HepG2 (cell line): ENCODE measurements at regions of chr3 and their contacts with region 1.

Region 1: DNA sequence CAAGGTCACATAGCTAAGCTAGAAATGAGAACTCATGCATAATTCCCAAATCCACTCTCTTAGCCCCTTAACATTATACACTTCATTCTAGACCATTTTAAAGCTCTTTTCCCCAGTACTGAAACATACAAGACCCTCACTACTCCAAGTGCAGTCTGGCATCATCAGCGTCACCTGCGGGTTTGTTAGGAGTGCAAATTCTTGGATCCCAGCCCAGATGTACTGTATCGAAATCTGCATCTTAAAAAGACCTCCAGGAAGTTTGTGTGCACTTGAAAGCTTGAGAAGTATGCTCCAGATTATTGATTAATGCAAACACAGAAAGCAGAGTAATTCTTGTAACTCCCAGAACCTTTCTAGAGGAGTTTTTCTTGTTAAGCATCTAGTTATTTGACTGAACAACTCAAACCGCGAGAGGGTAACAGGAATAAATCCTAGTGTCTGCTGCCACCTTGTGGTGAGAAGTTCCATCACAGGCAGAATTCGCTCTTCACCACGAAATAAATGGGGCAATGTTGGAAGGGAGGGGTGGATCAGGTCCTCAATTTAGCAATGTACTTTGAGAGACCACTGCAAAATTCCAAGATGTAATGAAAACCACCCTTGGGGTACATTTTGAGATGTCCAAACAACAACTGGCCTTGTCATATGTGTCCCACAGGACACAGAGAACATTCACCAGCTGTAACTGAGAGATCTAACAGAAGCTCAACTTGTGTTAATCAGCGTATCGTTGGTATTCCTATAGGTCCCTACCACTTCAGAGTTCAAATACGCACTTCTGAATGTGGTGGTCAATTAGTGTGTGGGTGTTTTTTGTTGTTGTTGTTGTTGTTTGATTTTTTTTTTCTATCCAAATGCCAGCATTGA is 583 bp upstream of the C3orf49 start:
- DNase-seq: peak; percentile 37
- ATAC-seq: peak; percentile 78
- H3K4me3 ChIP-seq: no peak overlapping the region
- H3K27ac ChIP-seq: no peak overlapping the region
- H3K4me1 ChIP-seq: peaks cover 10% of the 10 kb centered on the region
- H3K27me3 ChIP-seq: no peaks in the 10 kb centered on the region
- CTCF ChIP-seq: peak; percentile 84
- EP300 ChIP-seq: no peak
- POLR2A ChIP-seq: no peak
- RAD21 ChIP-seq: peak; percentile 63; the same call in 1 of the 2 replicates

Region 2: DNA sequence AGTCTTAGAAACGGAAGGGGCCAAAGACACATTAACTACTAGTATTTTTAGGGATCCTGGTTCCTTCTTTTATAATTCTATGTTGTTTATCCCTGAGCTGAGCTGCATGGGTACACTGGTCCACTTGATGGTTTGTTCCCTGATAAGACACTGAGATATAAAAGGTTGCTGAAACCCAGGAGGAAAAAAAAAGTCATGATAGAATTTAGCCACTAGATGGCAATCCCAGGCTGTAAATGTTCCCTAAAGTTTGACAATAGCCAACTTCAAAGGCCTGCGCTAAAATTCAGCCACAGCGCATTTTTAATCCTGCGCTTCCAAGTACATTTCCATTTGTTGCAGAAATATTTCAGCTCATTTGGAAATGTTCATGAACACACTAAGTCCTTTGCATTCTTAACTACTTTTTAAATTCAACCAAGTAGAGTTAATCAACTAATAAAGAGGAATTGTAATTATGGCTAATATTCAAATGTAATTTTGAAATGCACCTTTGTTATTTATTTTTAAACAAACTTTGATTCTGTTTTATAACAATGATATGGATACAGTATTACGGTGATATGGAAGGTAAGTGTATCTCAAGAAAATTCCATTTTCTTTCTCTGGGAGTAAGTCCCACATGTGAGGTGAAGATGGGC is 1195.8 kb before region 1 on chr3:
- CTCF ChIA-PET with region 1: no interaction called
- POLR2A ChIA-PET with region 1: no interaction called
- in situ Hi-C with region 1: loop called (anchors 25 kb)
- intact Hi-C with region 1: loop called (anchors 2 kb)
- DNase-seq: peak; percentile 48
- ATAC-seq: peak; percentile 30; the same call in 2 of the 3 replicates
- H3K4me3 ChIP-seq: no peak overlapping the region
- H3K27ac ChIP-seq: no peak overlapping the region
- H3K4me1 ChIP-seq: no peaks in the 10 kb centered on the region
- H3K27me3 ChIP-seq: no peaks in the 10 kb centered on the region
- CTCF ChIP-seq: peak; percentile 64
- EP300 ChIP-seq: no peak
- POLR2A ChIP-seq: no peak
- RAD21 ChIP-seq: peak; percentile 22; the same call in 1 of the 2 replicates

Region 3: DNA sequence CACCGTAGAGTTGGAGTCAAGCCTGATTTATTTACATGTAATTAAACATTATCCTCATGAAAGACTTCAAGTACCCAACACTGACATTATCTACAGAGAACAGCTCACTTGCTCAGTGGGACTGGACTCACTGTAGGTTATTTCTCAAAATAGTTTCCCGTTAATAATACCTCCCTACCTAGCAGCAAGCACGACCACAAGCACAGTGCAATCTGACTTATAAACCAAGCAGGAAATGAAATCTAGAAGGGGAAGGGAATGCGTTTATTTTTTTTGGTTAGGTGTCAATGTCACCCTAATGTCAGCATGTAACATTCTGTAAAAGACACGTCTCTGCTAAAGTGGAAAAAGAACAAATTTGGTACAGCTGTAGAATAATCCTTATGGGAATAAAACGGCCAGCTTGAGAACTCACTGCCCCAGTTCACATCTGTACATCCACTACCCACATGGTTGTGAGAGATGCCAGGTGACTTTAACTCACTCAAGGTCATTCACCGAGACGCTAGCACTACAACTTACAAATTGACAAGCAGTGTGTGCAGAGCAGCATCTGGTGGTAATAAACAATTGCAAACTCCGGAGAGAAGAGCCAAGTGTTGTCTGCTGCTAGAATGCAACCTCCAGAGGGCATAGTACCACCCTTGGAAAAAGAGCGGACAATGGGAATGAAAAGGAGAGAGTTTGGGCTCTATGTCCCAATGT is 1185.9 kb before region 1 on chr3:
- CTCF ChIA-PET with region 1: no interaction called
- POLR2A ChIA-PET with region 1: no interaction called
- in situ Hi-C with region 1: loop called (anchors 25 kb)
- intact Hi-C with region 1: no loop called
- DNase-seq: no peak
- ATAC-seq: peak; percentile 41; the same call in 2 of the 3 replicates
- H3K4me3 ChIP-seq: no peak overlapping the region
- H3K27ac ChIP-seq: no peak overlapping the region
- H3K4me1 ChIP-seq: no peaks in the 10 kb centered on the region
- H3K27me3 ChIP-seq: no peaks in the 10 kb centered on the region
- CTCF ChIP-seq: no peak
- EP300 ChIP-seq: no peak
- POLR2A ChIP-seq: no peak
- RAD21 ChIP-seq: no peak

Region 4: DNA sequence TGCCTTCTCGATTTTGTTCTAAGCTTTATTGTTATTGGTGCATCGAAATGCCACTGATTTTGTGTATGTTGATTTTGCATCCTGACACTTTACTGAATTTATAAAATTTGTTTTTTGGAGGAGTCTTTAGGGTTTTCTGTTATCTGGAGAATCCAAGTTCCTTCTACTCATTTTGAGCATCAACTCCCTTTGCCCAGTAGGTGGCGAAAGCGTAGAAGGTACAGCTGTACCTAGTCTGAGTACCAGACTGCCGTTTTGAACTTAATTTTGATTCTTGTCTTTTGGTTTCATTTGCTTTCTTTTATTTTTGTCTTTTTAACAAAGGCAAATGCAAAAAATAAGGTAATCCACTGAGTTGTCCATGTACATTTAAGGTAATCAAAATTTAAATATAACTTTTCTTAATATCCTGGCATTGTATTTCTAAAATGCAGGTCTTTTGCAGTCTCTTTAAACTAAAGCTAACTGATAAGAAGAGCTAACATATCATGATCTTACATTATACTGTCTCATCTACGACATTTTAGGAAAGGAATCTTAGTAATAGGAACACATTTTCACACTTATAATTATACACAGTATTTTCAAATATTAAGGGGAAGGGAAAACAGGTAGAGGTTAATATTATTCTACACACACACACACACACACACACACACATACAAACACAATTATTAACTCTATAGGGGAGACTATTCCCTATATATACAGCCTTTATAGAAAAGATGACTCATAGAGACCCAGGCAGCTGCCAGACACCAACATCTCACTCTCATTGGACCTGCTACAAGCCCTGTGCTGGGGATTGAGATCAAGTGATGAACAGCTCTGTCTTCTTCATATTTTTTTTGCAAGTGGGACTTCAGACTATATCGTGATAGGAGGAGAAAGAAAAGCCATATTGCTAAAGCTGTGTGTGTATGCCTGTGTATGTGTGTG is 468.7 kb before region 1 on chr3:
- CTCF ChIA-PET with region 1: interaction called, 35 read pairs
- POLR2A ChIA-PET with region 1: no interaction called
- in situ Hi-C with region 1: loop called (anchors 5 kb)
- intact Hi-C with region 1: loop called (anchors 1 kb)
- DNase-seq: peak; percentile 56
- ATAC-seq: peak; percentile 79
- H3K4me3 ChIP-seq: no peak overlapping the region
- H3K27ac ChIP-seq: no peak overlapping the region
- H3K4me1 ChIP-seq: no peaks in the 10 kb centered on the region
- H3K27me3 ChIP-seq: peaks cover 1 to 9% of the 10 kb centered on the region in 2 experiments; a peak in 2 of 5 replicates
- CTCF ChIP-seq: peak; percentile 67
- EP300 ChIP-seq: no peak
- POLR2A ChIP-seq: no peak
- RAD21 ChIP-seq: no peak

Region 5: DNA sequence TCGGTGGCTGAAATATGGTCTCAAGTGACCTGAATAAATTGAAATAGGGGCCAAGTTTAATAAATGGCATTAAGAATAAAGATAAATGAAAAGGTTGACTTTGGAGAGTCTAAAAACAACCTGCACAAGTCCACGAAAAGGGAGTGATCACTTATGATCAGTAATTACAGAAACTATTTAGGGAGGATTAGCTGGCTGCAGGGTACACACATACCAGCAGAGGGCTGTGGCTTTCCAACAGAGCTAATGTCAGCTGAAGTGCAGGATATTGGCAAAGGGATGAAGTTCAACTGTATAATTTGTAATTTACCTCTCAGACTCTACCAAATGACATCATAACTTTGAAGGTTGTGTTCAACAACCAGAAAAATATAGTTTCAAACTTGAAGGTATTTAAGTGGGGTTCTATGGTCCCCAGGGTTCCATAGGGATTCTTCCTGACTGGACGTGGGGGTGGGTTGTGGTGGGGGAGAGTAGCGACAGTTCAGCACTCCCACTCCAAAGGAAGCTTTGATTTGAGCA is 453.5 kb before region 1 on chr3:
- CTCF ChIA-PET with region 1: interaction called, 5 read pairs
- POLR2A ChIA-PET with region 1: no interaction called
- in situ Hi-C with region 1: no loop called
- intact Hi-C with region 1: loop called (anchors 1 kb)
- DNase-seq: no peak
- ATAC-seq: peak; percentile 74
- H3K4me3 ChIP-seq: no peak overlapping the region
- H3K27ac ChIP-seq: no peak overlapping the region
- H3K4me1 ChIP-seq: no peaks in the 10 kb centered on the region
- H3K27me3 ChIP-seq: no peaks in the 10 kb centered on the region
- CTCF ChIP-seq: peak; percentile 26; the same call in 1 of the 2 replicates
- EP300 ChIP-seq: no peak
- POLR2A ChIP-seq: no peak
- RAD21 ChIP-seq: no peak

Region 6: DNA sequence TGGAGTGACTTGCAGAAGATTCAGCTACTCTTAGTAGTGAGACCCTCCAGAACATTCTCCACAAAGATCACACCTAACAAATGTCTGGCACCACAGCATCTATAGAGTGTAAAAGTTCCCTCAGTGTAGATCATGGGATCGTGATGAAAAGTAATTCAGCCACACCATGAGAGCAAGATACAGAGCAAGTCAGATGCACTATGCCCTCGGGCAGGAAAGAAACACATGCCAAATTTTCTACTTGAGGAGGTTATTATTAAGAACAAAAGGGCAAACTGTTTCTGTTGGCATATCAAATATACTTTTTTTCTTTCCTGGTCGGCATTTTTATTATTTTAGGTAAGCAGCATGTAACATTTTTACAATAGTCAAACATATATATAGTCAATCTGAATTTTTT is 210.8 kb before region 1 on chr3:
- CTCF ChIA-PET with region 1: no interaction called
- POLR2A ChIA-PET with region 1: no interaction called
- in situ Hi-C with region 1: no loop called
- intact Hi-C with region 1: no loop called
- DNase-seq: no peak
- ATAC-seq: no peak
- H3K4me3 ChIP-seq: no peak overlapping the region
- H3K27ac ChIP-seq: no peak overlapping the region
- H3K4me1 ChIP-seq: no peaks in the 10 kb centered on the region
- H3K27me3 ChIP-seq: no peaks in the 10 kb centered on the region
- CTCF ChIP-seq: no peak
- EP300 ChIP-seq: no peak
- POLR2A ChIP-seq: no peak
- RAD21 ChIP-seq: no peak

Region 7: GRCh38 chr3:63998852-63999754 is 180.6 kb after region 1 on chr3:
- CTCF ChIA-PET with region 1: no interaction called
- POLR2A ChIA-PET with region 1: no interaction called
- in situ Hi-C with region 1: no loop called
- intact Hi-C with region 1: no loop called
- DNase-seq: no peak
- ATAC-seq: no peak
- H3K4me3 ChIP-seq: no peak overlapping the region
- H3K27ac ChIP-seq: no peak overlapping the region
- H3K4me1 ChIP-seq: no peaks in the 10 kb centered on the region
- H3K27me3 ChIP-seq: no peaks in the 10 kb centered on the region
- CTCF ChIP-seq: no peak
- EP300 ChIP-seq: no peak
- POLR2A ChIP-seq: no peak
- RAD21 ChIP-seq: no peak

Region 8: GRCh38 chr3:64023187-64023848 is 204.8 kb after region 1 on chr3 and contains the start of gene PSMD6:
- CTCF ChIA-PET with region 1: no interaction called
- POLR2A ChIA-PET with region 1: no interaction called
- in situ Hi-C with region 1: no loop called
- intact Hi-C with region 1: no loop called
- DNase-seq: peak; percentile 68
- ATAC-seq: peak; percentile 97
- H3K4me3 ChIP-seq: peak within 1 kb of the TSS; percentile 86 to 95 (median 90)
- H3K27ac ChIP-seq: peak within 1 kb of the TSS; percentile 77
- H3K4me1 ChIP-seq: peaks cover 29% of the 10 kb centered on the region
- H3K27me3 ChIP-seq: no peaks in the 10 kb centered on the region
- CTCF ChIP-seq: peak; percentile 99
- EP300 ChIP-seq: 0 out of 4 replicates have a peak, but pooled peaks of 1 of the 2 experiments have one; percentile 19
- POLR2A ChIP-seq: peak; percentile 82 to 83
- RAD21 ChIP-seq: peak; percentile 67
- total RNA-seq, gene PSMD6: 117 and 169 TPM in 2 replicates